Activated T-helper 2 cell treated with anti-CD3 and anti-CD28 coated beads, Interferon-gamma antibody, Interleukin-2, Interleukin-4, amounts not matched to agents 10 μg/mL and 5 μg/mL and 100 μg/mL, durations not matched to agents 14 hours and 24 hours and 36 hours (primary cell): ENCODE measurements at regions of chr5 and their contacts with region 1.

Region 1: DNA sequence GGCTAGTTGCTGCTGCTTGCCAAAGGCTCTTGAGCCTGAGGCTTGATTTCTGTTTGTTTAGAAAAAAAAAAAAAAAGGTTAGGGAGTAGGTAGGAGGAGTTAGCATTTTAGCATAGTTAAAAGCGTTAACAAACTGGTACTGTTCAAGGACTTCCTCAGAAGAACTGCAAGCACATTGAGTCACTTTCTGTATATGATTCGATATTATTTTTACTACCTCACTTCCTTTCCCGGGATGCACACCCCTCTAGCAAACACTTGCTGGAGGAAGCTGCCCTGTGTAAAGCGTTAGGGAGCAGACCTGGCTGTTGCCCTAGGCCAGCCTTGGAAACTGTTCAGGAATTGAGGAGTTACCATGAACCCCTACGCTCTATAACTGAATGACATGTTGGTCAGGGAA is 15.7 kb upstream of the CEP120 start:
- DNase-seq: peak; percentile 29
- H3K4me3 Mint-ChIP-seq: no peak overlapping the region
- H3K27ac Mint-ChIP-seq: peak overlapping the region; percentile 81
- H3K4me1 Mint-ChIP-seq: peaks cover 33% of the 10 kb centered on the region
- H3K27me3 Mint-ChIP-seq: no peaks in the 10 kb centered on the region

Region 2: DNA sequence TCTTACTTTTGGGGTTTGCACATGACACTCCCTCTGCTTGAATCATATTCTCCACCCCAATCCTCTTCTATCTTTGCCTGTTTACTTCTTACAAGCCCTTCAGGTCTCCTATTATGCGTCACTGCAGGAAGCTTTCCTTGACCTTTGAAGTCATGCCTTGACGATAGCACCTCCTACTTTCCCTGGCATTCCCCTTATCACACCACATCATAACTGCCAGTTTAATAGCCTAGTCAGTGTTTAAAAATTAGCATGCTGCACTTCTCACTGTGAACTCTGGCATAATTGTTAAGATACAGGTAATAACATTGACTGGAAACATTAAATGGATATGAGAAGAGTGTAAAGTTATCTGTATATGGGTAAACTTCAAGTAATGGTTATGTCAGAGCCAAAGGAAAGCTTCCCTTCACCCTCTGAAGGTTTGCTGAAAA is 21.4 kb after region 1 on chr5:
- intact Hi-C with region 1: loop called (anchors 1 kb)
- DNase-seq: no peak
- H3K4me3 Mint-ChIP-seq: no peak overlapping the region
- H3K27ac Mint-ChIP-seq: peak overlapping the region; percentile 89
- H3K4me1 Mint-ChIP-seq: peaks cover 14% of the 10 kb centered on the region
- H3K27me3 Mint-ChIP-seq: peaks cover 2% of the 10 kb centered on the region